T-cell (primary cell): ENCODE measurements at regions of chr16 and their contacts with region 1.

Region 1: DNA sequence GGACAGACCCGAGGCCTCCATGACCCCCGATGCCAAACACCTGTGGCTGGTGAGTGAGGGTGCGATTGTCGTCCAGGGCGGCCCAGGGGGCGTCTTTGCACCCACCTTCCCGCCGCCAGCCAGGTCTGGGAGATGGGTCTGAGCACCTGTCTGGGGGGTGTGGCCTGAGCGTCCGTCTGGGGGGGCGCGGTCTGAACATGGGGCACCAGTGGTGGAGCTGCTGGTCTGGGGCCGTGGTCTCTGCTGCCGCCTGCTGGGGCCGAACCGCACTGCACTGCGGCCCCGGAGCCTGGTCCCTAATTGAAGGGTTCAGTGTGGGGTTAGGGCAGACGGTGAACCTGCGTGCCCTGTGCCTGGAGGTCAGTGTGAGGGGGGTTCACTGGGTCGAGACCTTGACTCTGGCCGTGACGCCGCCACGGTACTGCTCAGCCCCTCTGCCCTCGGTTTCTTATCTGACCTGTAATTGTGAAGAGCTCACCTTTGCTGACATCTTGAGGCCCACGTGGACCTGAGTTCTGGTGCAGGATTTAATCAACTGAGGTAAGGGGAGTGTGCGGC is 12.6 kb upstream of the TCF25 start:
- DNase-seq: peak; percentile 37 to 84 (median 64)
- ATAC-seq: peak; percentile 75 to 80 (median 78)
- H3K4me3 ChIP-seq: no peak overlapping the region
- H3K4me3 Mint-ChIP-seq: peak overlapping the region in 1 of 3 donors; percentile 60
- H3K27ac ChIP-seq: no peak overlapping the region
- H3K27ac Mint-ChIP-seq: peak overlapping the region; percentile 12 to 27
- H3K4me1 ChIP-seq: peaks cover 17 to 44% of the 10 kb centered on the region in 2 experiments
- H3K4me1 Mint-ChIP-seq: peaks cover 31 to 41% (median 37%) of the 10 kb centered on the region in 3 donors
- H3K27me3 ChIP-seq: peaks cover 0 to 22% of the 10 kb centered on the region in 2 experiments
- H3K27me3 Mint-ChIP-seq: no peaks in the 10 kb centered on the region

Region 2: GRCh38 chr16:89293276-89294143 is 567.3 kb before region 1 on chr16:
- CTCF ChIA-PET with region 1: no interaction called
- POLR2A ChIA-PET with region 1: no interaction called
- DNase-seq: no peak
- ATAC-seq: no peak
- H3K4me3 ChIP-seq: no peak overlapping the region
- H3K4me3 Mint-ChIP-seq: no peak overlapping the region
- H3K27ac ChIP-seq: no peak overlapping the region
- H3K27ac Mint-ChIP-seq: no peak overlapping the region
- H3K4me1 ChIP-seq: peaks cover 12 to 53% of the 10 kb centered on the region in 2 experiments
- H3K4me1 Mint-ChIP-seq: peaks cover 43 to 56% (median 50%) of the 10 kb centered on the region in 3 donors
- H3K27me3 ChIP-seq: no peaks in the 10 kb centered on the region
- H3K27me3 Mint-ChIP-seq: no peaks in the 10 kb centered on the region

Region 3: DNA sequence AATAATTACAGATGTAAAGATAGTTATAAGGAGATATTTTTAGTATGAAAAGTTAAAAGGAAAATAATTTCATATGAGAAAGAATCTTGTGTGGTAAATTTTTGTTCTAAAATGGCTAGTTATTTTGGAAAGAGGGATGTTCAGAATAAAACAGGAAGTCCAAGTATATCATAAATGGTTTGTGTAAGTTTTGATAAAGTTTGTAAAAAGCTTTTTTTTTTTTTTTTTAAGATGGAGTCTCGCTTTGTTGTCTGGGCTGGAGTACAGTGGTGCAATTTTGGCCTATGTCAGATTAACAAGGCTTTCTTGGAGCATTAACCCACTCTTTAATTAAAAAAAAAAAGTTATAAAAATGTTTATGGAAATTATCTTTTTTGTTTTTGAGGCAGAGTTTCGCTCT is 182.6 kb before region 1 on chr16:
- CTCF ChIA-PET with region 1: no interaction called
- POLR2A ChIA-PET with region 1: interaction called in 1 of 2 experiments, 10 read pairs
- DNase-seq: no peak
- ATAC-seq: no peak
- H3K4me3 ChIP-seq: no peak overlapping the region
- H3K4me3 Mint-ChIP-seq: no peak overlapping the region
- H3K27ac ChIP-seq: no peak overlapping the region
- H3K27ac Mint-ChIP-seq: no peak overlapping the region
- H3K4me1 ChIP-seq: no peaks in the 10 kb centered on the region
- H3K4me1 Mint-ChIP-seq: no peaks in the 10 kb centered on the region
- H3K27me3 ChIP-seq: no peaks in the 10 kb centered on the region
- H3K27me3 Mint-ChIP-seq: no peaks in the 10 kb centered on the region

Region 4: GRCh38 chr16:89700100-89700648 is 160.7 kb before region 1 on chr16:
- CTCF ChIA-PET with region 1: interaction called, 6 to 17 read pairs
- POLR2A ChIA-PET with region 1: no interaction called
- DNase-seq: peak; percentile 82 to 99 (median 93)
- ATAC-seq: peak; percentile 10 to 38 (median 18)
- H3K4me3 ChIP-seq: peak overlapping the region; percentile 71
- H3K4me3 Mint-ChIP-seq: peak overlapping the region; percentile 63 to 77 (median 69)
- H3K27ac ChIP-seq: peak overlapping the region; percentile 86
- H3K27ac Mint-ChIP-seq: peak overlapping the region; percentile 43 to 66
- H3K4me1 ChIP-seq: peaks cover 4 to 49% of the 10 kb centered on the region in 2 experiments
- H3K4me1 Mint-ChIP-seq: peaks cover 5 to 36% (median 23%) of the 10 kb centered on the region in 3 donors
- H3K27me3 ChIP-seq: peaks cover 0 to 2% of the 10 kb centered on the region in 2 experiments
- H3K27me3 Mint-ChIP-seq: no peaks in the 10 kb centered on the region

Region 5: DNA sequence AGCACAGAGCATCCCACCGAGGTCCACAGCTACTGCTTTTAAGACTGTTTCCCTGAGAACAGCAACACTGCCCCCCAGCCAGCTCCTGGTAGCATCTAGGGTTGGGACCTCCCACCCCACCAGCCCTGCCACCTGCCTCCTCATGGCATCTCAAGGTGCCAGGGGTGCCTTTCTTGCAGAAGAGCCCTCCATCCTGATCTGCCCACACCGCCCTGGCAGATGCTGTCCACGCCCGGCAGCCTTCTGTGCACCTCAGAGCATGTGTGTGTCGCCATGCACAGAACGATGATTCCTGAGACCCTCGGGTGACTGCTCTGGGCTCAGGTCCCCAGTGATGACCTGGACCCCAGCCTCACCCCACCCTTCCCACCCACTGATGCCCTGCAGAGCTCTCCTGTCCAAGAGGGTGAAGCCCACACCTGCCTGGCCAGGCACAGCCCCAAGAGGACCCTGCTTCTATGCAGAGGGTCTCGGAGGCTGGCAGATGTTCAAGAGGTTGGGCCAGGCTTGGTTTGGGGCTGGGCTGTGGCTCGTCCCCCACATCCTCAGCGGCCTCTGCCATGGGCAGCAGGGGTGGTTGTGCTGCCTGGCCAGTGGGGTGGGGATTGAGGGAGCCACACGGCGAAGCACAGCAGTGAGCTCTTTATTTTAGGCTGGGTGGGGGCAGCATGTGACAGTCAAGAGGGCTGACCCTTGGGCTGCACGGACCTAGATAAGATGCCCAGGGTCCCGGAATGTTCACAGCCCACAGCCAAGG is 154.1 kb before region 1 on chr16:
- CTCF ChIA-PET with region 1: interaction called, 8 to 17 read pairs
- POLR2A ChIA-PET with region 1: no interaction called
- DNase-seq: no peak
- ATAC-seq: no peak
- H3K4me3 ChIP-seq: no peak overlapping the region
- H3K4me3 Mint-ChIP-seq: no peak overlapping the region
- H3K27ac ChIP-seq: no peak overlapping the region
- H3K27ac Mint-ChIP-seq: no peak overlapping the region
- H3K4me1 ChIP-seq: peaks cover 2 to 33% of the 10 kb centered on the region in 2 experiments
- H3K4me1 Mint-ChIP-seq: peaks cover 8 to 15% (median 12%) of the 10 kb centered on the region in 3 donors
- H3K27me3 ChIP-seq: peaks cover 0 to 3% of the 10 kb centered on the region in 2 experiments
- H3K27me3 Mint-ChIP-seq: no peaks in the 10 kb centered on the region

Region 6: GRCh38 chr16:89722392-89723278 is 138.2 kb before region 1 on chr16:
- CTCF ChIA-PET with region 1: interaction called in 1 of 2 experiments, 6 read pairs
- POLR2A ChIA-PET with region 1: interaction called in 1 of 2 experiments, 11 read pairs
- DNase-seq: peak; percentile 46 to 83 (median 68)
- ATAC-seq: peak; percentile 30 to 44 (median 39)
- H3K4me3 ChIP-seq: peak overlapping the region; percentile 70 to 81
- H3K4me3 Mint-ChIP-seq: peak overlapping the region; percentile 84 to 99 (median 96)
- H3K27ac ChIP-seq: peak overlapping the region; percentile 76
- H3K27ac Mint-ChIP-seq: peak overlapping the region; percentile 96 to 99
- H3K4me1 ChIP-seq: peaks cover 16 to 65% of the 10 kb centered on the region in 2 experiments
- H3K4me1 Mint-ChIP-seq: peaks cover 45 to 58% (median 50%) of the 10 kb centered on the region in 3 donors
- H3K27me3 ChIP-seq: no peaks in the 10 kb centered on the region
- H3K27me3 Mint-ChIP-seq: no peaks in the 10 kb centered on the region

Region 7: DNA sequence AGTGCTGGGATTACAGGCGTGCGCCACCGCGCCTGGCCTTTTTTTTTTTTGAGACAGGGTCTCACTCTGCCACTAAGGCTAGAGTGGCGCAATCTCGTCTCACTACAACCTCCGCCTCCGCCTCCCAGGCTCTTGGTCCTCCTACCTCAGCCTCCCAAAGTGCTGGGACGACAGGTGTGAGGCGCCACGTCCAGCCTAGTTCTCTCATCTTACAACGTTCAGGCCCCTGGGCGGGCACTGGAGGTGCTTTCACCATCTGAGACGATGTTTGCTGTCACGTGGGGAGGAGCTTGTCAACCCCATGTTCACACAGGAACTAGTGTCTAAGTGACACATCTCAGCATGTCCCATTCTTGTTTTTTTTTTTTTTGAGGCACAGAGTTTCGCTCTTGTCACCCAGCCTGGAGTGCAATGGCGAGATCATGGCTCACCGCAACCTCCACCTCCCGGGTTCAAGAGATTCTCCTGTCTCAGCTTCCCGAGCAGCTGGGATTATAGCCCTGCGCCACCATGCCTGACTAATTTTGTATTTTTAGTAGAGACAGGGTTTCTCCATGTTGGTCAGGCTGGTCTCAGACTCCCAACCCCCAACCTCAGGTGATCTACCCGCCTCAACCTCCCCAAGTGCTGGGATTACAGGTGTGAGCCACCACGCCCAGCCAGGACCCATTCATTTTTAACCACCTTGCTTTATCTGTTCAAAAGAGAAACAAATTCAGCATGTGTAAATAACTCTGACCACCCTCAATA is 39.2 kb before region 1 on chr16:
- CTCF ChIA-PET with region 1: interaction called in 1 of 2 experiments, 3 read pairs
- POLR2A ChIA-PET with region 1: interaction called in 1 of 2 experiments, 11 read pairs
- DNase-seq: peak in 26 of 35 experiments; percentile 9 to 72 (median 43)
- ATAC-seq: no peak
- H3K4me3 ChIP-seq: no peak overlapping the region
- H3K4me3 Mint-ChIP-seq: no peak overlapping the region
- H3K27ac ChIP-seq: no peak overlapping the region
- H3K27ac Mint-ChIP-seq: no peak overlapping the region
- H3K4me1 ChIP-seq: peaks cover 0 to 28% of the 10 kb centered on the region in 2 experiments
- H3K4me1 Mint-ChIP-seq: peaks cover 12 to 26% (median 23%) of the 10 kb centered on the region in 3 donors
- H3K27me3 ChIP-seq: no peaks in the 10 kb centered on the region
- H3K27me3 Mint-ChIP-seq: no peaks in the 10 kb centered on the region

Region 8: DNA sequence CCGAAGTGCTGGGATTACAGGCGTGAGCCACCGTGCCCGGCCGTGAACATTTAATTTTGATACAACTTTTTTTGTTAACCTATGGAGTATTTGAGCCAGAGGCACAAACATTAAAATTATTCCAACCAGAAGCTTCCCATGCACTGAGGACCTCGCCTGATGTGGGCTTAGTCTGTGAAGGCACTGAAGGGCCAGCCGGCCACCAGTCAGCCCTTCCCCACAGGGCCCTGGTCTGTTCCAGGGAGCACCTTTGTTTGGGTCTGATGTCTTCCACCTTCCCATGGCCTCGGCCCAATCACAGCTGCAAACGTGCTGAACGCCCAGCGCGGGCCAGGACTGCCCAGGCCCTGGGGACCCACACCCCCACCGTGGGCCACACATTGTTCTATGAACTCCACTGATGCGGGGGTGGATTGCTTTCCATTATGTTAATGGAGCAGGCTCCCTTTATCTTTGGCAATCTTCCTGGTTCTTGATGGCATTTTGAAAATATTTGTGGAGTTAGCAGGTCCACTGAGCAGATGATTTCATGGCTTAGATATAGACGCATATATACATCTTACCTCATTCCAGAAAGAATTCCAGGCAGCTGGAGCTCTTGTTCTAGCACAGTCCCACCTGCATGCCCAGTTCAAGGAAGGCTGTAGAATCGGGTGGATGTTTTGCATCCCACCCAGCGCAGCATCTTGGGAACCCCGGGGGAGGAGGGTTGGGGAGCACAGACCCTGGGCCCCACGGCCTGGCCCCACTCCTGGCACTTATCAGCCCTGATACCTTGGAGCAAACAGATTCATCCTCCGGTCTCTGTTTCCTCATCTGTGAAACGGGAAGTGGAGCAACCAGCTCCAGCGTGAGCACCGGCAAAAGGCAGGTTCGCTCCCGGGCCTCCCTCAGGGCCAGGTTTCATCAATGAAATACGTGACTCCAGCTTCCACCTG is 18.1 kb before region 1 on chr16:
- CTCF ChIA-PET with region 1: no interaction called
- POLR2A ChIA-PET with region 1: interaction called in 1 of 2 experiments, 10 read pairs
- DNase-seq: no peak
- ATAC-seq: no peak
- H3K4me3 ChIP-seq: no peak overlapping the region
- H3K4me3 Mint-ChIP-seq: no peak overlapping the region
- H3K27ac ChIP-seq: no peak overlapping the region
- H3K27ac Mint-ChIP-seq: no peak overlapping the region
- H3K4me1 ChIP-seq: peaks cover 2 to 44% of the 10 kb centered on the region in 2 experiments
- H3K4me1 Mint-ChIP-seq: peaks cover 20 to 34% (median 24%) of the 10 kb centered on the region in 3 donors
- H3K27me3 ChIP-seq: peaks cover 0 to 10% of the 10 kb centered on the region in 2 experiments
- H3K27me3 Mint-ChIP-seq: no peaks in the 10 kb centered on the region